ENCODE measurements at regions of chr7 and their contacts with region 1.

Region 1: DNA sequence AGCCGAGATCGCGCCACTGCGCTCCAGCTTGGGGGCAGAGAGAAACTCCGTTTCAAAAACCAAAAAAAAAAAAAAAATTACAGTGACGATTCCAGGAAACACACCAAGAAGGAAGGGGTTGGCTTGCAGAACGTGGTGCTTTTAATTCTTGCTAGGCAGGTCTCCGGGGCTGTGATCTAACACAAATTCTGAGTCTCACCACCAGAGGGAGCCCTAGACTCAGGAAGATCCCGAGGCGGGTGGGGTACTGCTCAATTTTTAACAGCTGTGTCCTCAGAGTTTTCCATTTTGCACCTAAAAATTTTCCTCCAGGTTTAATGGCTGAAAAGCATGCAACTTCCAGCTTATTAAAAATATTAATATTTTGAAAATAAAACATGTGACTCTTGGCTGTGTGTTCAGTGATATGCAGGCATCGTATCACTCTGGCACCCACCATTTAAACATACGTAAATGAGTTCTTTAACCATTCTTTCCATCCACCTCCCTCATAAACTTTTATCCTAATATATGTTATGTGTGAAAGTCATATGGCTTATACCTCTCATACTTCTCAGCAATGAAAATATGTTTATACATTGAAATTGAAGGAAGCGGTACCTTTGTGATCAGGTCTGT is 26.5 kb upstream of the NUB1 start:
- DNase-seq: peak; percentile 83
- ATAC-seq: peak; percentile 77
- H3K4me3 Mint-ChIP-seq: no peak overlapping the region
- H3K27ac Mint-ChIP-seq: no peak overlapping the region
- H3K4me1 Mint-ChIP-seq: peaks cover 12% of the 10 kb centered on the region
- H3K27me3 Mint-ChIP-seq: no peaks in the 10 kb centered on the region

Region 2: GRCh38 chr7:151304856-151305255 is 10.3 kb before region 1 on chr7:
- CTCF ChIA-PET with region 1: interaction called, 30 read pairs
- POLR2A ChIA-PET with region 1: no interaction called
- intact Hi-C with region 1: no loop called
- DNase-seq: no peak
- ATAC-seq: no peak
- H3K4me3 Mint-ChIP-seq: no peak overlapping the region
- H3K27ac Mint-ChIP-seq: peak overlapping the region; percentile 3
- H3K4me1 Mint-ChIP-seq: peaks cover 8% of the 10 kb centered on the region
- H3K27me3 Mint-ChIP-seq: peaks cover 23% of the 10 kb centered on the region

Region 3: DNA sequence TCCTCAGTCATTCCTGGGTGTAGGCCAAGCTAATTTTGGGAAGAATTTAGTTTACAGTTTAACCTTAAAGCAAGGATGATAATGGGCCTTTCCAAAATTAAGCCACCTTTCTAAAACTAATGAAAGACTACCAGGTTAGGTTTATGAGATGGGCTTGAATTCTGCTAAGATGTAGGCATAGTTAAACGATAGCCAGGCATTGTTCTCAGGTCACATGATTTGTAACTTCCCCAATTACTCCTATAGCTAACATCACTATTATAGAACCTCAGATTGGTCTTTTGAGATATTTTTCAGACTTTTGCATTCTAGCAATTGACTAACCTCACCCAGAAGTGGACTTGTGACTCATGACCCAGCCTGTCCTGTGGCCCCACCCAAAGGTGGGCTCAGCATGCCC is 19.5 kb after region 1 on chr7:
- CTCF ChIA-PET with region 1: interaction called, 34 read pairs
- POLR2A ChIA-PET with region 1: interaction called, 3 read pairs
- intact Hi-C with region 1: no loop called
- DNase-seq: no peak
- ATAC-seq: no peak
- H3K4me3 Mint-ChIP-seq: no peak overlapping the region
- H3K27ac Mint-ChIP-seq: no peak overlapping the region
- H3K4me1 Mint-ChIP-seq: peaks cover 18% of the 10 kb centered on the region
- H3K27me3 Mint-ChIP-seq: no peaks in the 10 kb centered on the region

Region 4: GRCh38 chr7:151368136-151368571 is 53.0 kb after region 1 on chr7:
- CTCF ChIA-PET with region 1: interaction called, 21 read pairs
- POLR2A ChIA-PET with region 1: interaction called, 4 read pairs
- intact Hi-C with region 1: loop called in 1 of 2 experiments (anchors 1 kb)
- DNase-seq: peak; percentile 88
- ATAC-seq: peak; percentile 100
- H3K4me3 Mint-ChIP-seq: no peak overlapping the region
- H3K27ac Mint-ChIP-seq: no peak overlapping the region
- H3K4me1 Mint-ChIP-seq: peaks cover 10% of the 10 kb centered on the region
- H3K27me3 Mint-ChIP-seq: no peaks in the 10 kb centered on the region

Region 5: GRCh38 chr7:151759591-151760042 is 444.5 kb after region 1 on chr7:
- CTCF ChIA-PET with region 1: no interaction called
- POLR2A ChIA-PET with region 1: no interaction called
- intact Hi-C with region 1: loop called in 1 of 2 experiments (anchors 1 kb)
- DNase-seq: peak; percentile 75
- ATAC-seq: peak; percentile 40
- H3K4me3 Mint-ChIP-seq: no peak overlapping the region
- H3K27ac Mint-ChIP-seq: no peak overlapping the region
- H3K4me1 Mint-ChIP-seq: peaks cover 25% of the 10 kb centered on the region
- H3K27me3 Mint-ChIP-seq: no peaks in the 10 kb centered on the region